Breast epithelium (tissue), 4 donors: ENCODE measurements at regions of chr2 and their contacts with region 1.

Region 1: GRCh38 chr2:182666674-182667314 is 49.3 kb upstream of the DNAJC10 start:
- DNase-seq: no peak
- H3K4me3 ChIP-seq: no peak overlapping the region
- H3K27ac ChIP-seq: no peak overlapping the region
- H3K4me1 ChIP-seq: no peaks in the 10 kb centered on the region
- H3K27me3 ChIP-seq: no peaks in the 10 kb centered on the region
- CTCF ChIP-seq: peak in 1 of 3 donors; percentile 16
- POLR2A ChIP-seq: no peak

Region 2: GRCh38 chr2:181008407-181008806 is 1658.4 kb before region 1 on chr2:
- intact Hi-C with region 1: no loop called
- DNase-seq: no peak
- H3K4me3 ChIP-seq: no peak overlapping the region
- H3K27ac ChIP-seq: no peak overlapping the region
- H3K4me1 ChIP-seq: no peaks in the 10 kb centered on the region
- H3K27me3 ChIP-seq: no peaks in the 10 kb centered on the region
- CTCF ChIP-seq: no peak
- POLR2A ChIP-seq: no peak

Region 3: DNA sequence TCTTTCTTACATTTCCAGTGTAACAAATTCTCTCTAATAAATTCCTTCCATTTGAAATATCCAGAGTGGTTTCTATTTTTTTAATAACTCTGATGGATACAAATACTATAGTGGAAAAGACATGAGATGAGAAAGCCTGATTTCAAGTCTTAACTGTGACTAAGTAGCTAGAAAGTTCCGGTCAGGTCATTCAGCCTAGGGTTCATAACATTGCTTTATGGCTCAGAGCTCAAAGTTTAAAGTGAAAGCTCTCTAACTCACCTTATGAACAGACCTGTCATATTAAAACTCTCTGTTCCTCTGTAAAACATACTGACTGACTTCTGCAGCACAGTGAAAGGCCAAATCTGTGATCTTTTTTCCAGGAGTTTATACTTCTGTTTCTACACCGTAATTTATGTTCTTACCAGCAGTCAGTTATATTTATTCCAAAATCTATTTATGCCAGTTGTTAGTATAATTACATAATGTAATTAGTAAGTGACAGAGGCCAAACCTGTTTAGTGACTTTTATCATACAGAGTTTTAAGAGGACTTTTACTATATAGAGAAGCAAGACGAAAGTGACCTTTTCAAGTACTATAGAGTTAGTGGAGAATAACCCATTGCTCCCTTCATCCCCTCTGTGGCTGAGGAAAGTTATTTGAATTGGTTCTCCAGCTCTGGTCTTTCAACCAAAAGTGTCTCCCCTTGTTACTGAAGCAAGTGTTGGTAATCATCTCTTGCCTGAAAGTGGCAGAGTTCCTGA is 121.2 kb before region 1 on chr2:
- intact Hi-C with region 1: no loop called
- DNase-seq: no peak
- H3K4me3 ChIP-seq: no peak overlapping the region
- H3K27ac ChIP-seq: no peak overlapping the region
- H3K4me1 ChIP-seq: no peaks in the 10 kb centered on the region
- H3K27me3 ChIP-seq: no peaks in the 10 kb centered on the region
- CTCF ChIP-seq: no peak
- POLR2A ChIP-seq: no peak

Region 4: DNA sequence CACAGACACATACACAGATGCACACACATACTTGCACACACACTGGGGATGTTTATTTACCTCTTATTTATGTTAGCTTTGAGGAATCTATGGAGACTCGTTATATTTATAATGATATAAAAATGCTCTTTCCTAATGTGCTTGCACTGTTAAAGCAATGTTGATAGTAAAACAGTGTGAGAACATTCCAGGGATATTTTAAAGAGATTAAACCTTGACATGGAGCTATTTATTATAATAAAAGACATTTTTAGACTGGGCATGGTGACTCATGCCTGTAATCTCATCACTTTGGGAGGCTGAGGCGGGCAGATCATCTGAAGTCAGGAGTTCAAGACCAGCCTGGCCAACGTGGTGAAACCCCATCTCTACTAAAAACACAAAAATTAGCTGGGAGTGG is 1374.3 kb after region 1 on chr2:
- intact Hi-C with region 1: loop called (anchors 10 kb)
- DNase-seq: no peak
- H3K4me3 ChIP-seq: no peak overlapping the region
- H3K27ac ChIP-seq: no peak overlapping the region
- H3K4me1 ChIP-seq: no peaks in the 10 kb centered on the region
- H3K27me3 ChIP-seq: no peaks in the 10 kb centered on the region
- CTCF ChIP-seq: no peak
- POLR2A ChIP-seq: no peak